IMR-90 (cell line): ENCODE measurements at regions of chr11 and their contacts with region 1.

Region 1: GRCh38 chr11:15988693-15989231 is 367.6 kb downstream of the SOX6 start:
- DNase-seq: no peak
- ATAC-seq: no peak
- H3K4me3 ChIP-seq: no peak overlapping the region
- H3K27ac ChIP-seq: peak overlapping the region; percentile 73; the same call in 1 of the 2 replicates
- H3K4me1 ChIP-seq: peaks cover 22% of the 10 kb centered on the region
- H3K27me3 ChIP-seq: no peaks in the 10 kb centered on the region
- CTCF ChIP-seq: no peak
- POLR2A ChIP-seq: no peak
- RAD21 ChIP-seq: 0 out of 2 replicates have a peak, but pooled peaks have one; percentile 24

Region 2: GRCh38 chr11:15819679-15820286 is 169.0 kb before region 1 on chr11:
- CTCF ChIA-PET with region 1: interaction called, 3 read pairs
- POLR2A ChIA-PET with region 1: no interaction called
- dilution Hi-C with region 1: no loop called
- in situ Hi-C with region 1: no loop called
- intact Hi-C with region 1: loop called (anchors 10 kb)
- DNase-seq: peak; percentile 19
- ATAC-seq: no peak
- H3K4me3 ChIP-seq: no peak overlapping the region
- H3K27ac ChIP-seq: no peak overlapping the region
- H3K4me1 ChIP-seq: peaks cover 13% of the 10 kb centered on the region
- H3K27me3 ChIP-seq: no peaks in the 10 kb centered on the region
- CTCF ChIP-seq: peak; percentile 46
- POLR2A ChIP-seq: no peak
- RAD21 ChIP-seq: peak; percentile 50

Region 3: DNA sequence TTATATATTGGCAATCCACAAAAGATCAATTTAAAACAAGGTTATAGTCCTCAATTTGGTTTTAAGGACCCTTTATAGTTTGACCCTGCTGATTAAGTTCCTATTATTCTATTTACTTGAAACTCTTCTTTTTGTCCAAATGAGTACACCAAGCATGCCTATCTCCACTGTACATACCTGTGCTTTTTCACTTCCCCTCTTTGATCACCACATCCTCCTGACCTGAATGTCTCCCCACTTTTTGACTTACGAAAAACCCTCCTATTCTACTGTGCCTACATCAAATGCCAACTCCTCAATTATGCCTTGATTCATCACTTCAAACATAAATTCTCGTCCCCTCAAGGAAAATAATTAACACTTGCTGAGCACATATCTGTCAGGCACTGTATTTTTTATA is 254.0 kb after region 1 on chr11:
- CTCF ChIA-PET with region 1: no interaction called
- POLR2A ChIA-PET with region 1: no interaction called
- dilution Hi-C with region 1: no loop called
- in situ Hi-C with region 1: no loop called
- intact Hi-C with region 1: no loop called
- DNase-seq: no peak
- ATAC-seq: no peak
- H3K4me3 ChIP-seq: no peak overlapping the region
- H3K27ac ChIP-seq: no peak overlapping the region
- H3K4me1 ChIP-seq: peaks cover 8% of the 10 kb centered on the region; the same call in 1 of the 2 replicates
- H3K27me3 ChIP-seq: no peaks in the 10 kb centered on the region
- CTCF ChIP-seq: no peak
- POLR2A ChIP-seq: no peak
- RAD21 ChIP-seq: no peak